CD4-positive, alpha-beta memory T cell (primary cell): ENCODE measurements at regions of chr2 and their contacts with region 1.

Region 1: DNA sequence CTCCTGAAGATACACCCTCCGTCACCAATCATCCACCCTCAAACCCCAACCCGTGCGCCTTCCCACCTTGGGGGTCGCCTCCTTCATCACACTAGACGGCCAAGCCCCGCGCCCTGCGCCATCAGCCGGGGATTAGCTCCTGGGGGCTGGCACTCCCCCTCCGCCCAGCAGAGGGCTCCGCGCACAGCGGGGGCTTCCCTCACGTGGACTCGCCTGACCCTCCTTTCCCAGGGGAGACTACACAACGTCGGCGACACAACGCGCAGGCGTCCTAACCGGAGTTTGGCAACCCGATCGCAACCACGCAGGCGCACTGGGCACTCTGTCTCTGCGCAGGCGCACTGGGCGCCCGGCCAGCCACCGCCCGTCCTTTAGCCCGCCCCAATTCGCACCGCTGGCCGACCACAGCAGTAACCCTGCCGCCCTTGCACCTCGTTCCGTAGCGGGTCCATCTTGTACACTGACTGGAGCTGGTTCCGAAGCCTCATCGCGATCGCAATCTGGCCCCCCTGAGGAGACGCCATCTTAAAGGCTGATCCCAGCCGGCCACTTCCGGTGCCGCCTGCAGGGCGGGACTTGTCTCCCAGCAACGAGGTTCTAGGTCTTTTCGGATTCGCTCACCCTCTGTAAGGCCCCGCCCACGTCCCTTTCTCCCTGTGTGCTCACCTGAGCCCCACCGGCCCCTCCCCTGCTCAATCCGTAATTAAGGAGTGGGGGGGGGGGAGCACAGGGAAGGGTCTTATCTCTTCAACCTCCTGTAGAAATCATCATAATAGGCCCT is at the start of gene PCGF1:
- DNase-seq: peak; percentile 98 to 99 (median 98)
- H3K4me3 ChIP-seq: peak within 1 kb of the TSS; percentile 83 to 97
- H3K4me3 Mint-ChIP-seq: peak within 1 kb of the TSS; percentile 98 to 100 (median 100)
- H3K27ac ChIP-seq: peak within 1 kb of the TSS; percentile 98
- H3K27ac Mint-ChIP-seq: peak within 1 kb of the TSS; percentile 97 to 100 (median 100)
- H3K4me1 ChIP-seq: peaks cover 40% of the 10 kb centered on the region
- H3K4me1 Mint-ChIP-seq: peaks cover 18 to 64% (median 46%) of the 10 kb centered on the region in 4 donors
- H3K27me3 ChIP-seq: peaks cover 19% of the 10 kb centered on the region
- H3K27me3 Mint-ChIP-seq: peaks cover 16 to 45% of the 10 kb centered on the region in 2 donors
- total RNA-seq, gene PCGF1: 31.1 to 42.2 TPM

Region 2: DNA sequence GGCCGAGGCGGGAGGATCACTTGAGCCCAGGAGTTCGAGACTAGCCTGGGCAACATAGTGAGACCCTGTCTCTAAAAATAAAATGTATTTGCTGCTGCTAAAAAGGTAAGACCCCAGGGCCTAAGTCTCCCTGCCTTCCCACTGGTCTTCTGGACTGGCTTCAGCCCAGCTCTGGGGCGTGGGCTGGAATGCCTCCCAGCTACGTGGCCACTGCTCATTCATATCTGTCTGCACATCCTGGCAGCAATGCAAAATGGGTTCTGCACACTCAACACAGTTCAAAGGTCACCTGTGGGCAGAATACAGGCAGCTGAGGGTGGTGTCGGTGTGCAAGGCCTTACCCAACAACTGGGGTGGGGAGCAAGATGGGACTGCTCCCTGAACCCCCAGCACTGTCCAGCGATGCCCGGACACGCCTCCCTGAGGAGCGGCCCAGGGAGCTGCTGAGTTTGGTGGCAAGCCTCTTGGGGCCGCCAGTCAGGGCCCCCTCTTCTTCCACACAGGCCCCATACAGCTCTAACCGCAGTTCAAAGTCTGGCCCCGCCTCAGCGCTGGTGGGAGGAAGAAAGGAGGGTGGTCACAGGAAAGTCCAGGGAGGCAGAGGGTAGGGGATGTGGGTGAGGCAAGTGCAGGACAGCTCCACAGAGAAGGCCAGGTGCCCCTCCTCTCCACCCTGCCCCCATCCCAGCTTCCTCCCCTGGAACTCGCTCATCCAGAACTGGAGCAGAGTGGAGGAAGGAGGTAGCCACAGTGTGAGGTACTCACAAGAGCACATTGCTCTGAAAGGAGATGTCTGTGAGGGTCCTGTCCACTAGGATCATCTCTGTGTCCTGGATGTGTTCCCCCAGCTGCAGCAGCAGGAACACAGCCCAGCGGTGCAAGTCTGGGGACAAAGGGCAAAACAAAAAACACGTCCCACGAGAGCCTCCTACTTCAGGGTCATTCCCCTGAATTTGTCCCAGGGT is 77.6 kb before region 1 on chr2:
- CTCF ChIA-PET with region 1: no interaction called
- POLR2A ChIA-PET with region 1: no interaction called
- intact Hi-C with region 1: no loop called
- DNase-seq: no peak
- H3K4me3 ChIP-seq: no peak overlapping the region
- H3K4me3 Mint-ChIP-seq: no peak overlapping the region
- H3K27ac ChIP-seq: no peak overlapping the region
- H3K27ac Mint-ChIP-seq: peak overlapping the region in 1 of 7 donors; percentile 68
- H3K4me1 ChIP-seq: no peaks in the 10 kb centered on the region
- H3K4me1 Mint-ChIP-seq: no peaks in the 10 kb centered on the region
- H3K27me3 ChIP-seq: no peaks in the 10 kb centered on the region
- H3K27me3 Mint-ChIP-seq: no peaks in the 10 kb centered on the region

Region 3: GRCh38 chr2:74553892-74554645 is 46.7 kb after region 1 on chr2 and contains the start of gene LOXL3:
- CTCF ChIA-PET with region 1: no interaction called
- POLR2A ChIA-PET with region 1: no interaction called
- intact Hi-C with region 1: loop called (anchors 1 kb)
- DNase-seq: peak; percentile 79 to 84 (median 82)
- H3K4me3 ChIP-seq: peak within 1 kb of the TSS; percentile 84 to 99
- H3K4me3 Mint-ChIP-seq: peak within 1 kb of the TSS; percentile 94 to 98 (median 96)
- H3K27ac ChIP-seq: peak within 1 kb of the TSS; percentile 64
- H3K27ac Mint-ChIP-seq: peak within 1 kb of the TSS; percentile 73 to 98 (median 93)
- H3K4me1 ChIP-seq: peaks cover 23% of the 10 kb centered on the region
- H3K4me1 Mint-ChIP-seq: peaks cover 7 to 35% (median 19%) of the 10 kb centered on the region in 4 donors
- H3K27me3 ChIP-seq: peaks cover 16% of the 10 kb centered on the region
- H3K27me3 Mint-ChIP-seq: peaks cover 11 to 25% of the 10 kb centered on the region in 2 donors
- total RNA-seq, gene LOXL3: 0.25 to 0.32 TPM